PC-9 (cell line): ENCODE measurements at regions of chrX and their contacts with region 1.

Region 1: GRCh38 chrX:24498975-24499374 is 33.9 kb downstream of the PDK3 start:
- DNase-seq: peak in 1 of 2 experiments; percentile 42
- H3K4me3 ChIP-seq: no peak overlapping the region
- H3K27ac ChIP-seq: no peak overlapping the region
- H3K4me1 ChIP-seq: peaks cover 11% of the 10 kb centered on the region
- H3K27me3 ChIP-seq: no peaks in the 10 kb centered on the region
- CTCF ChIP-seq: peak; percentile 70

Region 2: DNA sequence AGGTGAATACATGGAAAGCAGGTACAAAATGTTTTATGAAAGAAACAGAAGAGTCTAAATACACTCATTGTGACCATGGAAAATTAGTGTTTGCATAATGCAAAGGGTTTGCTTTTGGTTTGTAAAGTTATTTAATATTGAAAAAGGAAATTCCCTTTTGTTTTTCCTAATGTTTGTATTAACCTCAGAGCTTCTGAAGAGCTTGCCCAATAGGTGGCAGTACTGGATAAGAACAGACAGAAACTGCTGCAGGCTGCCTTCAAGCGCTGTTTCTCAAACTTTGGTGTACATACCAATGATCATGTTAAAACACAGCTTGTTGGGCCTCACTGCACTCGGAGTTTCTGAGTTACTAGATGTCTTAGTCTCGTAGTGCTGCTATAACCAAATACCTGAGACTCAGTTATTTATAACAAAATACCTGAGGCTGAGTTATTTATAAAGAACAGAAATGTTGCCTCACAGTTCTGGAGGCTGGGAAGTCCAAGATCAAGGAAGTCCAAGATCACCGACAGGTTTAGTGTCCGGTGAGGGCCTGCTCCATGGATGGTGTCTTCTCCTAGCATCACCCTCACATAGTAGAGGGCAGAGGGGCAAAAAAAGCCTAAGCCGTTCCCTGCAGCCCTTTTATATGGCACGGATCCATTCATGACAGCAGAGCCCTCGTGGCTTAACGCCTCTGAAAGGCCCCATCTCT is 239.3 kb before region 1 on chrX:
- CTCF ChIA-PET with region 1: interaction called, 3 read pairs
- POLR2A ChIA-PET with region 1: no interaction called
- intact Hi-C with region 1: loop called (anchors 10 kb)
- DNase-seq: peak in 1 of 2 experiments; percentile 48
- H3K4me3 ChIP-seq: no peak overlapping the region
- H3K27ac ChIP-seq: no peak overlapping the region
- H3K4me1 ChIP-seq: no peaks in the 10 kb centered on the region
- H3K27me3 ChIP-seq: no peaks in the 10 kb centered on the region
- CTCF ChIP-seq: peak; percentile 71

Region 3: GRCh38 chrX:24371391-24371972 is 127.5 kb before region 1 on chrX:
- CTCF ChIA-PET with region 1: interaction called, 4 read pairs
- POLR2A ChIA-PET with region 1: no interaction called
- intact Hi-C with region 1: loop called (anchors 1 kb)
- DNase-seq: peak in 1 of 2 experiments; percentile 34
- H3K4me3 ChIP-seq: no peak overlapping the region
- H3K27ac ChIP-seq: no peak overlapping the region
- H3K4me1 ChIP-seq: no peaks in the 10 kb centered on the region
- H3K27me3 ChIP-seq: no peaks in the 10 kb centered on the region
- CTCF ChIP-seq: peak; percentile 68

Region 4: GRCh38 chrX:24395775-24396174 is 103.2 kb before region 1 on chrX:
- CTCF ChIA-PET with region 1: interaction called, 14 read pairs
- POLR2A ChIA-PET with region 1: no interaction called
- intact Hi-C with region 1: loop called (anchors 1 kb)
- DNase-seq: peak in 1 of 2 experiments; percentile 38
- H3K4me3 ChIP-seq: no peak overlapping the region
- H3K27ac ChIP-seq: no peak overlapping the region
- H3K4me1 ChIP-seq: no peaks in the 10 kb centered on the region
- H3K27me3 ChIP-seq: peaks cover 8% of the 10 kb centered on the region; the same call in 1 of the 2 replicates
- CTCF ChIP-seq: peak; percentile 79